Transverse colon (tissue), 4 donors: ENCODE measurements at regions of chr10 and their contacts with region 1.

Region 1: GRCh38 chr10:100518761-100519241 is 860 bp downstream of the SEC31B start:
- DNase-seq: peak; percentile 70
- H3K4me3 ChIP-seq: peak overlapping the region in 3 of 4 donors; percentile 20 to 47 (median 36)
- H3K27ac ChIP-seq: no peak overlapping the region
- H3K4me1 ChIP-seq: peaks cover 0 to 12% (median 6%) of the 10 kb centered on the region in 4 donors
- H3K27me3 ChIP-seq: peaks cover 8% of the 10 kb centered on the region
- CTCF ChIP-seq: peak; percentile 65 to 71 (median 68)
- EP300 ChIP-seq: no peak
- POLR2A ChIP-seq: no peak

Region 2: GRCh38 chr10:99548041-99548530 is 970.7 kb before region 1 on chr10:
- in situ Hi-C with region 1: no loop called
- intact Hi-C with region 1: no loop called
- DNase-seq: no peak
- H3K4me3 ChIP-seq: no peak overlapping the region
- H3K27ac ChIP-seq: no peak overlapping the region
- H3K4me1 ChIP-seq: no peaks in the 10 kb centered on the region
- H3K27me3 ChIP-seq: peaks cover 72% of the 10 kb centered on the region
- CTCF ChIP-seq: peak; percentile 30 to 48 (median 35)
- EP300 ChIP-seq: no peak
- POLR2A ChIP-seq: no peak

Region 3: GRCh38 chr10:100291356-100291755 is 227.4 kb before region 1 on chr10:
- in situ Hi-C with region 1: no loop called
- intact Hi-C with region 1: no loop called
- DNase-seq: no peak
- H3K4me3 ChIP-seq: no peak overlapping the region
- H3K27ac ChIP-seq: peak overlapping the region in 3 of 4 donors; percentile 28 to 47 (median 30)
- H3K4me1 ChIP-seq: peaks cover 0 to 5% (median 0%) of the 10 kb centered on the region in 4 donors
- H3K27me3 ChIP-seq: peaks cover 7% of the 10 kb centered on the region
- CTCF ChIP-seq: no peak
- EP300 ChIP-seq: no peak
- POLR2A ChIP-seq: no peak

Region 4: GRCh38 chr10:100346765-100347567 is 171.8 kb before region 1 on chr10 and contains the start of gene SCD:
- in situ Hi-C with region 1: loop called in 3 of 4 experiments (anchors 10 to 25 kb)
- intact Hi-C with region 1: no loop called
- DNase-seq: peak; percentile 77
- H3K4me3 ChIP-seq: peak within 1 kb of the TSS; percentile 36 to 73 (median 56)
- H3K27ac ChIP-seq: peak within 1 kb of the TSS in 3 of 4 donors; percentile 63 to 72 (median 66)
- H3K4me1 ChIP-seq: peaks cover 0 to 36% (median 21%) of the 10 kb centered on the region in 4 donors
- H3K27me3 ChIP-seq: no peaks in the 10 kb centered on the region
- CTCF ChIP-seq: peak in 1 of 5 experiments; percentile 11
- EP300 ChIP-seq: no peak
- POLR2A ChIP-seq: peak; percentile 78
- total RNA-seq, gene SCD: 9.2 to 62.1 (median 21.8) TPM